ENCODE measurements at regions of chr1 and their contacts with region 1.

Region 1: GRCh38 chr1:87800006-87800405 is 471.3 kb downstream of the LMO4 start:
- DNase-seq: no peak
- ATAC-seq: no peak
- H3K4me3 ChIP-seq: no peak overlapping the region
- H3K27ac ChIP-seq: no peak overlapping the region
- H3K4me1 ChIP-seq: no peaks in the 10 kb centered on the region
- H3K27me3 ChIP-seq: no peaks in the 10 kb centered on the region
- CTCF ChIP-seq: no peak

Region 2: DNA sequence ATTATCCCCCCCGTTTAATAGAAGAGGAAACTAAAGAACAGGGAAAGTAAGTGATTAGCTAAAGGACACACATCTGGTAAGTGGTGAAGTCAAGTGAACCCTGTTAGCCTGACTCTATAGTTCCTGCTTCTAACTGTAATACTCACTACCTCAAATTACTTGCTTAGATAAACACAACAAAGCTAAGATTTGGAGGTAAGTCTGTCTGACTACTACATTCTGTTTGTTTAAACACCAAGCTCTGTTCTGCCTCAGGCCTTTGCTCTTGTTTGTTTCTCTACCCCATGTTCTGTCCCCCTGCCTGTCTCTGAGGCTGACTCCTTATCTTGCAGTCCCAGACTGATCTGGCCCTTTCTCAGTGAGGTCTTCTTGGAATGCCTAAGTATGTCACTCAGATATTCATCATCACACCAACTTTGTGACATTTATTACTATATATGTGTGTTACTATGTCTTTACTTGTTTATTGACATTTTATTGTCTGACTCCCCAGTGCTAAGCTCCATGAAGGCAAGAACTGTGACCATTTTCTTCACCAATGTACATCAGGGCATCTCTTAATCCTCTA is 45.9 kb before region 1 on chr1:
- intact Hi-C with region 1: loop called in 1 of 2 experiments (anchors 2 kb)
- DNase-seq: no peak
- ATAC-seq: no peak
- H3K4me3 ChIP-seq: no peak overlapping the region
- H3K27ac ChIP-seq: no peak overlapping the region
- H3K4me1 ChIP-seq: no peaks in the 10 kb centered on the region
- H3K27me3 ChIP-seq: no peaks in the 10 kb centered on the region
- CTCF ChIP-seq: no peak

Measured in psoas muscle (tissue), 8 donors.